Naive thymus-derived CD4-positive, alpha-beta T cell (primary cell): ENCODE measurements at regions of chr11 and their contacts with region 1.

Region 1: DNA sequence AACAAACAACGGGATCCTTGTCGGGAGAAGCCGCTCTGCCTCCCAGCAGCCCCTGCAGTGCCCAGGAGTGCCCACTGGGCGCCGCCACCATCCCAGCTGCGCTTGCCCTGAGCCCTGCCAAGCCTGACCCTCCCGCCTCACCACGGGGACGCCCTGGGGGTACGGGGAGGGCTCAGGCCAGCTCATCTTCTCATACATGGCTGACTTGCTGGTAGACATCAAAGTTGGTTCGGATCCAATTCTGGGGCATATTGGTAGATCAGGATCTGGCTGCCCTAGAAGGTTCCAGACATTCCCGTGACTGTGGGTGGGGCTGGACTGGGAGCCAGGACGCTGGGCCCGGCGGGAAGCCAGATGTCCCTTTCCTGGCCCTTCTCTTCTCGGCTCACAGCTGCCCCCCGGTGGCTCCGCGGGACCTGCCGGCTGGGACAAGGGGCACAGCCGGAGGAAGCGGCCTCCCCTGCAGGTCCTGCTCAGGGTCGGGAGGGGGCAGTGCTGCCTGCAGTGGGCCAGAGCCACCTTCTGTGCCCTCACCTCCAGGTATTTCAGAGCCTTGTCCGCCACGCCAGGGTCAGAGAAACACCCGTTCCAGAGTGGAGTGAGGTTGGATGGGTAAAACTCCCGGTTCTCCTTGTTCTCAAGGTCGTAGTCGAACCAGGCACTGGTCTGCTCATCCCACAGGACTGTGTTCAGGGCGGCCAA is 10.6 kb upstream of the TREH start:
- DNase-seq: peak; percentile 71 to 87 (median 82)
- ATAC-seq: peak; percentile 96
- H3K4me3 ChIP-seq: peak overlapping the region; percentile 73
- H3K4me3 Mint-ChIP-seq: peak overlapping the region; percentile 56 to 80 (median 74)
- H3K27ac ChIP-seq: peak overlapping the region; percentile 69
- H3K27ac Mint-ChIP-seq: peak overlapping the region in 8 of 9 donors; percentile 51 to 91 (median 72)
- H3K4me1 ChIP-seq: peaks cover 42 to 46% of the 10 kb centered on the region in 2 donors
- H3K4me1 Mint-ChIP-seq: peaks cover 34 to 58% (median 52%) of the 10 kb centered on the region in 7 donors
- H3K27me3 ChIP-seq: no peaks in the 10 kb centered on the region
- H3K27me3 Mint-ChIP-seq: peaks cover 0 to 23% (median 0%) of the 10 kb centered on the region in 5 donors

Region 2: GRCh38 chr11:118610804-118611795 is 78.9 kb before region 1 on chr11:
- CTCF ChIA-PET with region 1: no interaction called
- POLR2A ChIA-PET with region 1: no interaction called
- intact Hi-C with region 1: no loop called
- DNase-seq: peak; percentile 72 to 89 (median 82)
- ATAC-seq: peak; percentile 71
- H3K4me3 ChIP-seq: peak overlapping the region; percentile 61
- H3K4me3 Mint-ChIP-seq: peak overlapping the region; percentile 35 to 88 (median 78)
- H3K27ac ChIP-seq: peak overlapping the region; percentile 57
- H3K27ac Mint-ChIP-seq: peak overlapping the region in 7 of 9 donors; percentile 33 to 82 (median 70)
- H3K4me1 ChIP-seq: peaks cover 18 to 23% of the 10 kb centered on the region in 2 donors
- H3K4me1 Mint-ChIP-seq: peaks cover 16 to 26% (median 23%) of the 10 kb centered on the region in 7 donors
- H3K27me3 ChIP-seq: no peaks in the 10 kb centered on the region
- H3K27me3 Mint-ChIP-seq: peaks cover 0 to 54% (median 0%) of the 10 kb centered on the region in 5 donors

Region 3: GRCh38 chr11:118705111-118705741 is 15.2 kb after region 1 on chr11:
- CTCF ChIA-PET with region 1: interaction called, 30 read pairs
- POLR2A ChIA-PET with region 1: interaction called, 100 read pairs
- intact Hi-C with region 1: loop called in 1 of 2 experiments (anchors 2 kb)
- DNase-seq: peak in 7 of 9 donors; percentile 50 to 72 (median 63)
- ATAC-seq: peak; percentile 79
- H3K4me3 ChIP-seq: no peak overlapping the region
- H3K4me3 Mint-ChIP-seq: peak overlapping the region; percentile 67 to 84 (median 76)
- H3K27ac ChIP-seq: peak overlapping the region; percentile 62
- H3K27ac Mint-ChIP-seq: peak overlapping the region; percentile 49 to 99 (median 95)
- H3K4me1 ChIP-seq: peaks cover 28 to 41% of the 10 kb centered on the region in 2 donors
- H3K4me1 Mint-ChIP-seq: peaks cover 20 to 63% (median 47%) of the 10 kb centered on the region in 7 donors
- H3K27me3 ChIP-seq: no peaks in the 10 kb centered on the region
- H3K27me3 Mint-ChIP-seq: peaks cover 0 to 8% (median 0%) of the 10 kb centered on the region in 5 donors

Region 4: DNA sequence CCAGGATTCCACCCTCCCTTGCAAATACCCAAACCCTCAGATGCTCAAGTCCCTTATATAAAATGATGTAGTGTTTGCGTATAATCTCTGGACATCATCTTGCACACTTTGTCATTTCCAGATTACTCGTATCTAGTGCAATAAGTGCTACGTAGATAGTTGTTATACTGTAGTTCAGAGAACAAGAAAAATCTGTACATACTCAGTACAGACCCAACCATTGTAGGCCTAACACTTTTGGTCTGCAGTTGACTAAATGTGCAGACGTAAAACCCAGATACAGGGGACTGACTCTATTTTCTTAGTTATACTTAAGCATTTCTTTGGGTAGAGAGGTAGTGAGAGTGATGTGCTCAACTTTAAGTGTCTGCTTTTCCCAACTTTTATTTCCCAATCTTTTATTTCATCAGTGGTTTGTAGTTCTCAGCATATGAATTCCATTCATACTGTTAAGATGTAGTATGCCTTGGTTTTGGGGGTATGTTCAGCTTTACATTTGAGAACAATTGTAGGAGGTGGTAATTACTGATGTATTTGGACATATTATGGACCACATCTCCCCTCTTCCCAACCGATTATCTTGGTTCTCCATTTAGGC is 57.1 kb after region 1 on chr11:
- CTCF ChIA-PET with region 1: interaction called, 10 read pairs
- POLR2A ChIA-PET with region 1: interaction called, 5 read pairs
- intact Hi-C with region 1: loop called in 1 of 2 experiments (anchors 1 kb)
- DNase-seq: no peak
- ATAC-seq: no peak
- H3K4me3 ChIP-seq: no peak overlapping the region
- H3K4me3 Mint-ChIP-seq: no peak overlapping the region
- H3K27ac ChIP-seq: no peak overlapping the region
- H3K27ac Mint-ChIP-seq: peak overlapping the region in 7 of 9 donors; percentile 29 to 79 (median 52)
- H3K4me1 ChIP-seq: no peaks in the 10 kb centered on the region
- H3K4me1 Mint-ChIP-seq: peaks cover 3 to 26% (median 7%) of the 10 kb centered on the region in 7 donors
- H3K27me3 ChIP-seq: no peaks in the 10 kb centered on the region
- H3K27me3 Mint-ChIP-seq: no peaks in the 10 kb centered on the region

Region 5: DNA sequence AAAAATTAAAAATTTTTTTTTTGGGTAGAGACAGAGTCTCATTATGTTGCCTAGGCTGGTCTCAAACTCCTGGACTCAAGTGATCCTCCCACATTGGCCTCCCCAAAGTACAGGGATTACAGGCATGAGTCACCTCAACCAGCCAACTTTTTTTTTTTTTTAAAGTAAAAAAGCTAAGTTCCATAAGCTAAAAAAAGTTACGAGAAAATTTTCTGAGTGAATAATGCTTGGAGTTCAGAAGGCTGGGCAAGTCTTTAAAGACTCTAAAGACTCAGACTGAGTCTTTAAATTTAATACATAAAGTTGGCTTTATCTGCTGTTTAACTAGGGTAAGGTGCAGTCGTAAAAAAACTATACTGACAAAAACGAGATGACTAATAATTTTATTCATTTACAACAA is 95.4 kb after region 1 on chr11:
- CTCF ChIA-PET with region 1: interaction called, 47 read pairs
- POLR2A ChIA-PET with region 1: interaction called, 82 read pairs
- intact Hi-C with region 1: loop called (anchors 1 to 2 kb)
- DNase-seq: no peak
- ATAC-seq: no peak
- H3K4me3 ChIP-seq: peak overlapping the region; percentile 24
- H3K4me3 Mint-ChIP-seq: peak overlapping the region in 8 of 10 donors; percentile 63 to 100 (median 86)
- H3K27ac ChIP-seq: peak overlapping the region; percentile 50
- H3K27ac Mint-ChIP-seq: peak overlapping the region in 3 of 9 donors; percentile 25 to 86 (median 27)
- H3K4me1 ChIP-seq: peaks cover 60 to 70% of the 10 kb centered on the region in 2 donors
- H3K4me1 Mint-ChIP-seq: peaks cover 18 to 73% (median 51%) of the 10 kb centered on the region in 7 donors
- H3K27me3 ChIP-seq: no peaks in the 10 kb centered on the region
- H3K27me3 Mint-ChIP-seq: no peaks in the 10 kb centered on the region

Region 6: DNA sequence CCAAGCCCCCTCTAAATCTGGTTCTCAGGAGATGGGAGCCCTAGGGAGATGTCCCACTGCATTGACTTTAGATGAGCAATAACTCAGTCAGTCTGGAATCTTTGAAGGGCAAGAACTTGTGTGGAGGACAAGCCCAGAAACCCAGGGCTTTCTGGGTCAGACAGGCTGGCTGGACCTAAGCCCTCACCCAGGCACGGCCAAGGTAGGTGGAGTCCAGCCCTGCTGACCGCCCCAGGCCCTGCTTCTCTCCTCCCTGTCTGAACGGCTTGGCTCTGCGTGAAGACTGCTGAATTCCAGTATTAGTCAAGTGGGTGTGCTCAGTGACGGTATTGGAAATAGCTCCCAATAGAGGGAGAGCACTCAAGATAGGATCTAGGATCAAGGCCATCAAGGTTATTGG is 199.8 kb after region 1 on chr11:
- CTCF ChIA-PET with region 1: interaction called, 5 read pairs
- POLR2A ChIA-PET with region 1: interaction called, 9 read pairs
- intact Hi-C with region 1: loop called in 1 of 2 experiments (anchors 1 kb)
- DNase-seq: no peak
- ATAC-seq: no peak
- H3K4me3 ChIP-seq: no peak overlapping the region
- H3K4me3 Mint-ChIP-seq: peak overlapping the region in 5 of 10 donors; percentile 8 to 82 (median 59)
- H3K27ac ChIP-seq: no peak overlapping the region
- H3K27ac Mint-ChIP-seq: peak overlapping the region in 6 of 9 donors; percentile 52 to 98 (median 96)
- H3K4me1 ChIP-seq: peaks cover 58 to 71% of the 10 kb centered on the region in 2 donors
- H3K4me1 Mint-ChIP-seq: peaks cover 53 to 92% (median 83%) of the 10 kb centered on the region in 7 donors
- H3K27me3 ChIP-seq: no peaks in the 10 kb centered on the region
- H3K27me3 Mint-ChIP-seq: no peaks in the 10 kb centered on the region

Region 7: GRCh38 chr11:118956094-118956846 is 266.3 kb after region 1 on chr11 and contains the start of gene UPK2:
- CTCF ChIA-PET with region 1: interaction called, 6 read pairs
- POLR2A ChIA-PET with region 1: interaction called, 4 read pairs
- intact Hi-C with region 1: loop called (anchors 1 kb)
- DNase-seq: peak; percentile 74 to 91 (median 83)
- ATAC-seq: peak; percentile 99
- H3K4me3 ChIP-seq: no peak within 1 kb of the TSS
- H3K4me3 Mint-ChIP-seq: peak within 1 kb of the TSS in 1 of 10 donors; percentile 49
- H3K27ac ChIP-seq: no peak within 1 kb of the TSS
- H3K27ac Mint-ChIP-seq: peak within 1 kb of the TSS in 8 of 9 donors; percentile 2 to 77 (median 54)
- H3K4me1 ChIP-seq: no peaks in the 10 kb centered on the region
- H3K4me1 Mint-ChIP-seq: peaks cover 0 to 11% (median 5%) of the 10 kb centered on the region in 7 donors
- H3K27me3 ChIP-seq: no peaks in the 10 kb centered on the region
- H3K27me3 Mint-ChIP-seq: peaks cover 0 to 31% (median 0%) of the 10 kb centered on the region in 5 donors
- total RNA-seq, gene UPK2: 0.24 TPM in 1 of 5 experiments, not detected in the others